ENCODE measurements at regions of chr10 and their contacts with region 1.

Region 1: GRCh38 chr10:11949152-11949551 is 93.5 kb downstream of the UPF2 start:
- DNase-seq: no peak
- H3K4me3 ChIP-seq: no peak overlapping the region
- H3K27ac ChIP-seq: no peak overlapping the region
- H3K4me1 ChIP-seq: no peaks in the 10 kb centered on the region
- H3K27me3 ChIP-seq: no peaks in the 10 kb centered on the region
- CTCF ChIP-seq: no peak
- POLR2A ChIP-seq: no peak

Region 2: GRCh38 chr10:11294831-11295450 is 654.2 kb before region 1 on chr10:
- intact Hi-C with region 1: loop called (anchors 5 kb)
- DNase-seq: no peak
- H3K4me3 ChIP-seq: no peak overlapping the region
- H3K27ac ChIP-seq: no peak overlapping the region
- H3K4me1 ChIP-seq: no peaks in the 10 kb centered on the region
- H3K27me3 ChIP-seq: no peaks in the 10 kb centered on the region
- CTCF ChIP-seq: no peak
- POLR2A ChIP-seq: no peak